Activated CD4-positive, alpha-beta memory T cell treated with anti-CD3 and anti-CD28 coated beads, Interleukin-2, amount 10 ng/mL, durations not matched to agents 7 days and 5 days (primary cell): ENCODE measurements at regions of chr10 and their contacts with region 1.

Region 1: DNA sequence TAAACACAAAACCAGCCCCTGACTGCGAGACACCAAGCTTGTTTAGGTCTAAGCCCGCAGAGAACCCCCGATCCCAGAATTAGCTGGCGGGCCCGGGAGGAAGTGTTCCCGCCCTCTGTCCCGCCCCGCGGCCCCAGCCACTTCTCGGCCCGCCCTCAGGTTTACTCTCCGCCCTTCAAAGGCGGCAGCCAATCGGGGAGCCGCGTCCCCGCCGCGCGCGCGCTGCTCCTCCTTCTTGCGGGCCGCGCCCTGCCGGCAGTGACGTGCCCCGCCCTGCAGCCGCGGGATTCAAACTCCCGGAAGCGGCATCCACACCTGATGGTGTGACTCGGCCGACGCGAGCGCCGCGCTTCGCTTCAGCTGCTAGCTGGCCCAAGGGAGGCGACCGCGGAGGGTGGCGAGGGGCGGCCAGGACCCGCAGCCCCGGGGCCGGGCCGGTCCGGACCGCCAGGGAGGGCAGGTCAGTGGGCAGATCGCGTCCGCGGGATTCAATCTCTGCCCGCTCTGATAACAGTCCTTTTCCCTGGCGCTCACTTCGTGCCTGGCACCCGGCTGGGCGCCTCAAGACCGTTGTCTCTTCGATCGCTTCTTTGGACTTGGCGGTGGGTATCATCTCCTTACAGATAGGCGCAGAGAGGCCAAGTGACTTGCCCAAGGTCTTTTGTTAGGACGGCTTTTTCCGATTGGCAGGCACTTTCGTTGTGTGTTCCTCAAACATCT is at the start of gene CEP55:
- DNase-seq: peak; percentile 98
- H3K4me3 Mint-ChIP-seq: peak within 1 kb of the TSS; percentile 93
- H3K27ac Mint-ChIP-seq: peak within 1 kb of the TSS; percentile 94
- H3K4me1 Mint-ChIP-seq: peaks cover 43% of the 10 kb centered on the region
- H3K27me3 Mint-ChIP-seq: no peaks in the 10 kb centered on the region
- total RNA-seq, gene CEP55: 82.5 to 84.6 TPM

Region 2: GRCh38 chr10:93461807-93462178 is 34.7 kb before region 1 on chr10:
- CTCF ChIA-PET with region 1: no interaction called
- POLR2A ChIA-PET with region 1: interaction called, 18 read pairs
- DNase-seq: peak; percentile 37
- H3K4me3 Mint-ChIP-seq: no peak overlapping the region
- H3K27ac Mint-ChIP-seq: peak overlapping the region; percentile 85
- H3K4me1 Mint-ChIP-seq: peaks cover 48% of the 10 kb centered on the region
- H3K27me3 Mint-ChIP-seq: no peaks in the 10 kb centered on the region

Region 3: DNA sequence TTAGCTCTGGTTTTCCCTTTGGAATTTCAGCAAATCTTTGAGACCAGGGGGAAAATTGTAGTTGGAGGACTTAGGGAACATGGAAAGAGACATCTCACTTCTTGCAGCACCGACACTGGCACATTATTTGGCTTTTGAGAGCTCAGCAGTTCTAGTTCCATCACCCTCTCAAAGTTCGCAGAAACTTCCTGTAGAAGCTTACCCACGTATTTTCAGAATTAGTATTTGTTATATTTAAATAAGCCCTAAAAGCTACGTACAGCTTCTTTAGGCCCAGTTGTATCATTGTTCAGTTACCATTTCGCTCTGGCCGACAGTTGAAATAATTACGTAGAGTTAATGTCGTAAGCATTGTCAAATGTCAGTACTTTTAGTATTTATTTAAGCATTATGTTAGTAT is 13.3 kb after region 1 on chr10:
- CTCF ChIA-PET with region 1: interaction called, 25 read pairs
- POLR2A ChIA-PET with region 1: interaction called, 89 read pairs
- DNase-seq: no peak
- H3K4me3 Mint-ChIP-seq: no peak overlapping the region
- H3K27ac Mint-ChIP-seq: peak overlapping the region; percentile 68
- H3K4me1 Mint-ChIP-seq: peaks cover 44% of the 10 kb centered on the region
- H3K27me3 Mint-ChIP-seq: no peaks in the 10 kb centered on the region

Region 4: GRCh38 chr10:93515071-93516005 is 18.9 kb after region 1 on chr10:
- CTCF ChIA-PET with region 1: interaction called, 25 read pairs
- POLR2A ChIA-PET with region 1: interaction called, 89 read pairs
- DNase-seq: no peak
- H3K4me3 Mint-ChIP-seq: no peak overlapping the region
- H3K27ac Mint-ChIP-seq: no peak overlapping the region
- H3K4me1 Mint-ChIP-seq: peaks cover 7% of the 10 kb centered on the region
- H3K27me3 Mint-ChIP-seq: no peaks in the 10 kb centered on the region